ENCODE measurements at regions of chr5 and their contacts with region 1.

Region 1: GRCh38 chr5:173890195-173890991 is 2.2 kb downstream of the CPEB4 start:
- DNase-seq: peak; percentile 48
- ATAC-seq: peak in 1 of 2 donors; percentile 2

Region 2: DNA sequence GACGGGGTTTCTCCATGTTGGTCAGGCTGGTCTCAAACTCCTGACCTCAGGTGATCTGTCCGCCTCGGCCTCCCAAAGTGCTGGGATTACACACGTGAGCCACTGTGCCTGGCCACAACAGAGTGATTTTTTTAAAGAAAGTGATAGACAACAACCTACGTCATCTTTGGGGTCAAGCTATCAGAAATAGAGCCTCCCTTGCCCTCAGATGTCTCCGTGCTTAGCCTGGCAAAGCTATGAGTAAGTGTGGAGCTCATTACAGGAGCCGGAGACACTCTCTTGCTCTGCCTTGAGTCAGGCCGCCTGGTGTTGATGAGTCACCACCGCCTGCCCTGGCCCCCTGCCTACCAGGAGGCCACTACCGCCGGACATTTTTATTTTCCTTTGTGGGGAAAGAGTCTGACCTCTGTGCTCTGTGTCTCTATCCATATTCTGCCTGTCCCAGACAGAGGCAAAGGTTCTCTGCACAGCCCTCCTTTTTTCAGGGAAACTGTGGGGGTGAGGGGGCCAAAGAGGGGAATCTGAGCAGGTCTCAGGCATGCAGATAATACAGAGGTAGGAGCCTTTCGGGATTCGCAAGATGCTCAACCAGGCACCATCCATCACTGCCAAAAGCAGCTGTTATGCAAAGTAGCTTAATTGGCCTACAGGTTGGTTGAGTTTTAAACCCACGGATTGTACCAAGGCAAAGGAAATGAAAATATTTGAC is 125.9 kb before region 1 on chr5:
- intact Hi-C with region 1: loop called in 1 of 2 experiments (anchors 2 kb)
- DNase-seq: peak; percentile 90
- ATAC-seq: peak; percentile 61 to 90

Region 3: GRCh38 chr5:173907686-173908371 is 17.4 kb after region 1 on chr5:
- intact Hi-C with region 1: no loop called
- DNase-seq: no peak
- ATAC-seq: peak in 1 of 2 donors; percentile 53

Region 4: GRCh38 chr5:173954671-173955521 is 64.5 kb after region 1 on chr5:
- intact Hi-C with region 1: loop called in 1 of 2 experiments (anchors 10 kb)
- DNase-seq: no peak
- ATAC-seq: peak; percentile 55 to 89

Region 5: GRCh38 chr5:174003795-174004194 is 113.4 kb after region 1 on chr5:
- intact Hi-C with region 1: no loop called
- DNase-seq: no peak
- ATAC-seq: no peak

Measured in left cardiac atrium (tissue), 4 donors.